Caco-2 (cell line): ENCODE measurements at regions of chr18 and their contacts with region 1.

Region 1: DNA sequence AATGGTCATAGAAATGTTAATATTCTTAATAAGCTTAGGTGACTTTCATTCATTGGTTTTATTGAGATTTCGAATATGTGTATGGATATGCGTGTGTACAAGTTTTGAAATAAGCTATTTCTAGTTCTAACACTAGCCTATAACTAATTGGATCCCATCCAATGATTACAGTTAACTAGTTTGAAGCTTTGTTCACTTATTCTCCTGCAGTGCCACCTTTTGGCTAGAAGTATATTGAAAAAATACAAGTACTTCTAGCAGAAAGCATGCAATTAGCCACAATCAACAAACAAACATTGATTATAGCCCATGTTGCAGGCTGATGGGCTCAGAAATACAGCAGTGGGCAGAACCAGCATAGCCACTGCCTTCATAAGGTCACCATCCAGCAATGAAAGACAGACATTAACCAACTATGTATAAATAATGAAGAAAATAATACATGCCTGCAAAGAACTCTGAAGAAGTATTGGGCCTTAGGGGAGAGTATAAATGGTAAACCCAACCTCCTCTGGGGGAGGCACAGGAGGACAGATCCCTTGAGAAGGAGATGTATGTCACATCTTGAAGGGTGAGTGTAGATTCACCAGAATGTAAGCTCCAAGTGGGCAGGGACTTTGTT is 5.1 kb upstream of the PIEZO2 start:
- DNase-seq: peak in 1 of 2 experiments; percentile 51
- H3K4me3 ChIP-seq: no peak overlapping the region
- H3K4me3 Mint-ChIP-seq: no peak overlapping the region
- H3K27ac Mint-ChIP-seq: no peak overlapping the region
- H3K4me1 ChIP-seq: no peaks in the 10 kb centered on the region
- H3K4me1 Mint-ChIP-seq: no peaks in the 10 kb centered on the region
- H3K27me3 ChIP-seq: no peaks in the 10 kb centered on the region
- H3K27me3 Mint-ChIP-seq: no peaks in the 10 kb centered on the region
- CTCF ChIP-seq: peak; percentile 59 to 62

Region 2: GRCh38 chr18:10560450-10561045 is 593.9 kb before region 1 on chr18:
- CTCF ChIA-PET with region 1: interaction called, 13 read pairs
- POLR2A ChIA-PET with region 1: no interaction called
- intact Hi-C with region 1: loop called (anchors 2 kb)
- DNase-seq: peak; percentile 69 to 77
- H3K4me3 ChIP-seq: no peak overlapping the region
- H3K4me3 Mint-ChIP-seq: no peak overlapping the region
- H3K27ac Mint-ChIP-seq: no peak overlapping the region
- H3K4me1 ChIP-seq: no peaks in the 10 kb centered on the region
- H3K4me1 Mint-ChIP-seq: no peaks in the 10 kb centered on the region
- H3K27me3 ChIP-seq: no peaks in the 10 kb centered on the region
- H3K27me3 Mint-ChIP-seq: no peaks in the 10 kb centered on the region
- CTCF ChIP-seq: peak; percentile 64 to 82

Region 3: DNA sequence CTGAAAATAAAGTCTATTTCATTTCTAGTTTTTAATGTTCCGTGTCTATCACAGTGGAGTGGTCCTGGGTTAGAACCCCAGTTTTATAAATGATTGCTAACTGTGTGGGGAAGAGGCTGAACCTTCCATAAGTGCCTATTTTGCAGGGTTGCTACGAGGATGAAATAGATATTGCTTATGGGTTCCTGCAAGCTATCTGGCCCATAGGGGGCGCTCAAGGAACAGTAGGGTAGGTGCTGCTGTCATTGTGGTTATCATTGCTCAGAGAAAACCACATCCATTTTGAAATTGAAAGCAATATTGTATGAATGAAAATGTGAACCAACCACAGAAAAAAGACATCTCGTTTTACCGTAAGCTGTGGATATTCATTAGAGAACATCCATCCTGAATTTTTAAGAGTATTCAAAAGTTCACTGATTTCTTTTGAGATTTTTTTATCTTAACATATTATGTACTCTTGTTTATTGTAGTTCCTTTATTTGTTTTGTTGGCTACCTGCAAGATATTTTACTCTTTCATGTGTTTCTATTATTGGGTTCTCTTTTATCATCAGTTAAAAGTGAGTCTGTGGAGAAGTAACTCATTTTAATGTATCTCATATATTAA is 367.1 kb before region 1 on chr18:
- CTCF ChIA-PET with region 1: interaction called, 4 read pairs
- POLR2A ChIA-PET with region 1: no interaction called
- intact Hi-C with region 1: loop called (anchors 1 kb)
- DNase-seq: peak; percentile 74 to 82
- H3K4me3 ChIP-seq: no peak overlapping the region
- H3K4me3 Mint-ChIP-seq: no peak overlapping the region
- H3K27ac Mint-ChIP-seq: no peak overlapping the region
- H3K4me1 ChIP-seq: no peaks in the 10 kb centered on the region
- H3K4me1 Mint-ChIP-seq: no peaks in the 10 kb centered on the region
- H3K27me3 ChIP-seq: no peaks in the 10 kb centered on the region; the same call in none of the 2 replicates
- H3K27me3 Mint-ChIP-seq: peaks cover 16% of the 10 kb centered on the region
- CTCF ChIP-seq: peak; percentile 74 to 76

Region 4: GRCh38 chr18:10851824-10852319 is 302.6 kb before region 1 on chr18:
- CTCF ChIA-PET with region 1: interaction called, 10 read pairs
- POLR2A ChIA-PET with region 1: no interaction called
- intact Hi-C with region 1: loop called (anchors 1 kb)
- DNase-seq: peak in 1 of 2 experiments; percentile 52
- H3K4me3 ChIP-seq: no peak overlapping the region
- H3K4me3 Mint-ChIP-seq: no peak overlapping the region
- H3K27ac Mint-ChIP-seq: no peak overlapping the region
- H3K4me1 ChIP-seq: peaks cover 12% of the 10 kb centered on the region
- H3K4me1 Mint-ChIP-seq: no peaks in the 10 kb centered on the region
- H3K27me3 ChIP-seq: no peaks in the 10 kb centered on the region; the same call in 1 of the 2 replicates
- H3K27me3 Mint-ChIP-seq: peaks cover 3% of the 10 kb centered on the region
- CTCF ChIP-seq: peak; percentile 71 to 77

Region 5: DNA sequence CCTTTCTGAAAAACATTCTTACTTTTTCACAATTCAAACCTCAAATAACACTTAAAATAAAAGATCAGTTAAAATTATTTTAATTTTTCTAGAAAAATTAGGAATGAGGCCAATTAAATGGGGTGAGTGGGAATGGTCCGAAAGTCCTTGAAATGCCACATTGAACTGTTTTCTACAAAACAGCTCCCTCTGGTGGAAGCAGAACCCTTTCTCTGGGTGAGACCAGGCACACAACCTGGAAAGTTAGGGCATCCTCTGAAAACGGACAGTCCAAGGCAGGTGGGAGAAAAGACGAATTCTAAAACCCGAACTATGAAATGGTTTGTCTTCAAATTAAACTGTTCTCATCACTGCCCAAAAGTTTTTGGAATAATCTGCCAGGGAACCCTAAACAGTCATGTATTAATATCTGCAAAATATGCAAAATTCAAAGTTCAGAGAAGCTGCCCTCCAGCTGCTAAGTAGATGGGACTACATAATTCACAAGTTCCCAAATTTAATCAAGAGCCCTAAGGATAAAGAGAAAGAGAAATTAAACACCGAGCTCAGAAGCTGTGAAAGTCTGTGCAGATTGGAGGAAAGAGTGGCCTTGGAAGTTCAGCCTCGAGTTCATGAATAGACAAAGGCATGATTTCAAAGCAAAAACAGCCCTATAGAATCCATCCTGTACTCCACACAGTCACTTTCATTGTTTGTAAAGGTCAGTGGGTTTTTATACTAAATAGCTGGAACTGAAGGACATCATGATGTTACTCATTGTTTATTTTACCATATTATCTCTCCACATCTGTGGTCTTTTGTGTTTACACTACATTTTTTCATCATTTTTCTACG is 113.4 kb before region 1 on chr18:
- CTCF ChIA-PET with region 1: interaction called, 10 read pairs
- POLR2A ChIA-PET with region 1: no interaction called
- intact Hi-C with region 1: loop called (anchors 1 kb)
- DNase-seq: peak; percentile 51 to 69
- H3K4me3 ChIP-seq: no peak overlapping the region
- H3K4me3 Mint-ChIP-seq: no peak overlapping the region
- H3K27ac Mint-ChIP-seq: no peak overlapping the region
- H3K4me1 ChIP-seq: no peaks in the 10 kb centered on the region
- H3K4me1 Mint-ChIP-seq: no peaks in the 10 kb centered on the region
- H3K27me3 ChIP-seq: no peaks in the 10 kb centered on the region
- H3K27me3 Mint-ChIP-seq: no peaks in the 10 kb centered on the region
- CTCF ChIP-seq: peak; percentile 67 to 81

Region 6: DNA sequence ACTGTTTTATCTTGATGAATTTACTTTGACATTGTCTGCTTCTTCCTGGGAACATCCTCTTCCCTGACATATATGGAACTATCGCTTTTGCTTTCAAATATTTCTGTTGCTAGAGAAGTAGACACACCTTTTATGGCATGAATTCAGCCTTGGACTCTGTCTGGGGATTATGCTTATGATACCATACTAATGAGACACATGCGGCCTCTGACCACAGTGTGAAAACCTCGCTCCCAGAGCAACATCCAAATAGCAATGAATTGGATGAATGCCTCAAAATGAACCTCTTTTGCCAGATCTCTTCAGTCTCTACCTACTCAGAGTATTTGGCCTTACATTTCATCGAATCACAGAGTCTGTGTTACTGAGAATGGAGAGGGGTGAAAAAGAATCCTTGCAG is 76.0 kb before region 1 on chr18:
- CTCF ChIA-PET with region 1: no interaction called
- POLR2A ChIA-PET with region 1: no interaction called
- intact Hi-C with region 1: no loop called
- DNase-seq: no peak
- H3K4me3 ChIP-seq: no peak overlapping the region
- H3K4me3 Mint-ChIP-seq: no peak overlapping the region
- H3K27ac Mint-ChIP-seq: no peak overlapping the region
- H3K4me1 ChIP-seq: no peaks in the 10 kb centered on the region
- H3K4me1 Mint-ChIP-seq: no peaks in the 10 kb centered on the region
- H3K27me3 ChIP-seq: no peaks in the 10 kb centered on the region; the same call in 1 of the 2 replicates
- H3K27me3 Mint-ChIP-seq: no peaks in the 10 kb centered on the region
- CTCF ChIP-seq: no peak

Region 7: DNA sequence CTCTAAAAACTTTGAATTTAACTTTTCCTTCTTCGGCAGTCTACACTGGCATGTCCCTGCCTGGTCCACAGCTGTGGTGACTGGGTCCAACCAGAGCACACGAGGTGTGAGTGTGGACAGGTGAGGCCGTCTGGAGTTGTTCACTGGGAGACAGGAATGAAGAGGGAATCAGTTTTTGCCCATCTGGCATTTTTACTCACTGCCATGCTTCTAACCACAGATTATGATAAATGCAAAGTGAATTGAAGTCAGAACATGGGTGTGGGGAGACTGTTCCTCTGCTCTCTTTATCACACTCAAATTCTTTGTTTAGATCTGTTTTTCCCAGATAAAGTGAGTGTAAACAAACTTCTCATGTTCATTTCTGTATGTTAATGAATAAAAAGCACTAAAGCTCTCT is 49.5 kb after region 1 on chr18:
- CTCF ChIA-PET with region 1: no interaction called
- POLR2A ChIA-PET with region 1: no interaction called
- intact Hi-C with region 1: no loop called
- DNase-seq: no peak
- H3K4me3 ChIP-seq: no peak overlapping the region
- H3K4me3 Mint-ChIP-seq: no peak overlapping the region
- H3K27ac Mint-ChIP-seq: no peak overlapping the region
- H3K4me1 ChIP-seq: no peaks in the 10 kb centered on the region
- H3K4me1 Mint-ChIP-seq: no peaks in the 10 kb centered on the region
- H3K27me3 ChIP-seq: no peaks in the 10 kb centered on the region; the same call in 1 of the 2 replicates
- H3K27me3 Mint-ChIP-seq: peaks cover 6% of the 10 kb centered on the region
- CTCF ChIP-seq: no peak

Region 8: GRCh38 chr18:11553098-11553940 is 398.8 kb after region 1 on chr18:
- CTCF ChIA-PET with region 1: interaction called, 5 read pairs
- POLR2A ChIA-PET with region 1: no interaction called
- intact Hi-C with region 1: loop called (anchors 2 kb)
- DNase-seq: peak; percentile 55 to 69
- H3K4me3 ChIP-seq: no peak overlapping the region
- H3K4me3 Mint-ChIP-seq: no peak overlapping the region
- H3K27ac Mint-ChIP-seq: no peak overlapping the region
- H3K4me1 ChIP-seq: no peaks in the 10 kb centered on the region
- H3K4me1 Mint-ChIP-seq: no peaks in the 10 kb centered on the region
- H3K27me3 ChIP-seq: no peaks in the 10 kb centered on the region; the same call in 1 of the 2 replicates
- H3K27me3 Mint-ChIP-seq: peaks cover 4% of the 10 kb centered on the region
- CTCF ChIP-seq: peak; percentile 87 to 89